AG04449 (cell line): ENCODE measurements at regions of chr1 and their contacts with region 1.

Region 1: GRCh38 chr1:94805912-94806311 is 14.2 kb upstream of the SLC44A3 start:
- DNase-seq: no peak
- H3K4me3 ChIP-seq: peak overlapping the region; percentile 0
- CTCF ChIP-seq: peak; percentile 74

Region 2: GRCh38 chr1:94471271-94471670 is 334.6 kb before region 1 on chr1:
- CTCF ChIA-PET with region 1: interaction called, 52 read pairs
- POLR2A ChIA-PET with region 1: no interaction called
- DNase-seq: no peak
- H3K4me3 ChIP-seq: no peak overlapping the region
- CTCF ChIP-seq: no peak

Region 3: GRCh38 chr1:94504601-94505000 is 301.3 kb before region 1 on chr1:
- CTCF ChIA-PET with region 1: interaction called, 32 read pairs
- POLR2A ChIA-PET with region 1: no interaction called
- DNase-seq: no peak
- H3K4me3 ChIP-seq: no peak overlapping the region
- CTCF ChIP-seq: no peak

Region 4: DNA sequence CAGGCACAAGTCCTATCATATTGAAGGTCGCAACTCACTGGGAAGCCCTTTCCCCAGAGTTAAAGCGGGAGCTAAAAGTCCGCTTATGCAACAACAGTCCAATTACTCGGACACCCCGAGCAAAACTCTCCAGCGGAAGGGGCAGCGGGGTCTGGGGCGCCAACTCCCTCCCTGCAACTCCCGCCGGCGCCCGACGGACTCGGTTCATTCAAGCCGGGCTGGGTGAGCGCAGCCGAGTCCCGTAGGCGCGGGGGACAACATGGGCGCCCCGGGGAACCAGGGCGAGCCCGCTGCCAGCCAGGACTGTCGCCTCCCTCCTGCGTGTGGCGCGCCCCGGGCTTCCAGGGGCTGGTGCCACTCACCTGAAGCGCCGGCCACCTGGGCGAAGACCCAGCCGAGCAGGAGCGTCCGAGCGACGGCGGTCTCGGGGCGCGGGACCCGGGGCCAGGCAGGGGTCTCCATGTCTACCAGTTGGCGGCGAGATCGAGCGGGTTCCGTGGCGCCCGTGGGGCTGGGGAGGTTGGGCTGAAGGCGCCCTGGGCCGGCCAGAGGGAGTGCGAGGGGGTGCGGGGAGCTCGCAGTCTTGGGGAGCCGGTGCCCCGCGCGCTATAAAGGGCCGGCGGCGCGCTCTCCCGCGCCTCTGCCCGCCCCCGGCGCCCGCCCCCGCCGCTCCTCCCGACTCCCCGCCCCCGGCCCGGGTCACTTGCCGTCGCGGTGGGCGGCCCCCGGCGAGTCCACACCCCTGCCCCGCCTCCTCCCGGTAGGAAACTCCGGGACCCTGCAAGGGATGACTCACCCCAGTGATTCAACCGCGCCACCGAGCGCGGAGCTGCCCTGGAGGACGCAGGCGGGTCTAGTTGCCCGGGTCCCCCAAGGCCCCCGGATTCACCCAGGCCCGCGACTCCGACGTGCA is 264.5 kb before region 1 on chr1 and contains the start of gene F3:
- CTCF ChIA-PET with region 1: interaction called, 24 read pairs
- POLR2A ChIA-PET with region 1: no interaction called
- DNase-seq: no peak
- H3K4me3 ChIP-seq: peak within 1 kb of the TSS; percentile 66
- CTCF ChIP-seq: peak; percentile 15

Region 5: GRCh38 chr1:94743862-94744261 is 62.0 kb before region 1 on chr1:
- CTCF ChIA-PET with region 1: no interaction called
- POLR2A ChIA-PET with region 1: no interaction called
- DNase-seq: no peak
- H3K4me3 ChIP-seq: no peak overlapping the region
- CTCF ChIP-seq: no peak

Region 6: DNA sequence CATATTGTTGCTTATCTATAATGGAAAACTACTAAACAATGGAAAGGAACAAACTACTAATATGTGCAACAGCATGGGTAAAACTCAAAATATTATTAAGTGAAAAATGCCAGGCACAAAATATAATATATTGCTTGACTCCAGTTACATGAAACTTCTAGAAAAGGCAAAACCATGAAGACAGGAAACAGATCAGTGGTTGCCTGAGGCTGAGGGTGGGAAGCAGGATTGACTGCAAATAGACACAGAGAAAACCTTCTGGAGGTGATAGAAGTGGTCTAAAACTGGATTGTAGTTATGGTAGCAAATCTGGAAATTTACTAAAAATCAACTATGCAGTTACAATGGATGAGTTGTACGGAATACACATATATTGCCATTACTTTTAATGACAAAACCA is 15.2 kb before region 1 on chr1:
- CTCF ChIA-PET with region 1: interaction called, 16 read pairs
- POLR2A ChIA-PET with region 1: no interaction called
- DNase-seq: no peak
- H3K4me3 ChIP-seq: no peak overlapping the region
- CTCF ChIP-seq: no peak

Region 7: GRCh38 chr1:94854458-94855306 is 48.8 kb after region 1 on chr1:
- CTCF ChIA-PET with region 1: interaction called, 15 read pairs
- POLR2A ChIA-PET with region 1: no interaction called
- DNase-seq: peak; percentile 55
- H3K4me3 ChIP-seq: peak overlapping the region; percentile 56
- CTCF ChIP-seq: peak; percentile 94

Region 8: GRCh38 chr1:95122151-95122697 is 316.3 kb after region 1 on chr1:
- CTCF ChIA-PET with region 1: no interaction called
- POLR2A ChIA-PET with region 1: no interaction called
- DNase-seq: no peak
- H3K4me3 ChIP-seq: no peak overlapping the region
- CTCF ChIP-seq: no peak